ENCODE measurements at regions of chr2 and their contacts with region 1.

Region 1: DNA sequence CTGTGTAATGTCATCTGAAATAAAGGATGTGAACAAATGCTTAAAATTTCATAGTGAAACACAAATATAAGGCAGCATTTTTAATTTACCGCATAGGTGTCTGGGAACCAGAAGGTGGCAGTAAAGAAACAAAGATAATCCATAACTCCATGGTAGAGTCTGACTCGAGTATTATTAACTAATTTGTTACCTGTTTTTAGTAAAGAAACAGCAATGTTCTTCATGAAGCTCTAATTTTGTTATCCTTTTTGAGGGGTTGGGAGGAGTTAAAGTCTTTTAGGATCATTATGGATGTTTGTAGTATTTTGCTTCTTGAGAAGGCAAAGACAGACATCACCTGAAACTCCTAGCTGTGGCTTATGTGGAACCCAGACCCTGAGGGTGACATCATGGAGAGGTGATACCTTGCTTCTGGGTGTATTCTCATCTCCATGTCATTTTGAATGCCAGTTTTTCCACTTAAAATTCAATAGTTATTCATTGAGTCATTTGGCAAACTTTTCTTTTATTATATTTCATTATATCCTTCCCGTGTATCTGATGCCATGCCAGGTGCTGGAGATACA is 286.2 kb upstream of the EPAS1 start:
- DNase-seq: no peak
- H3K4me3 ChIP-seq: no peak overlapping the region
- H3K27ac ChIP-seq: no peak overlapping the region
- H3K4me1 ChIP-seq: peaks cover 0 to 8% (median 4%) of the 10 kb centered on the region in 4 donors
- H3K27me3 ChIP-seq: no peaks in the 10 kb centered on the region
- CTCF ChIP-seq: peak; percentile 56 to 77 (median 64)
- EP300 ChIP-seq: no peak
- POLR2A ChIP-seq: no peak

Region 2: GRCh38 chr2:46179037-46179652 is 168.1 kb after region 1 on chr2:
- in situ Hi-C with region 1: no loop called
- intact Hi-C with region 1: no loop called
- DNase-seq: peak; percentile 48
- H3K4me3 ChIP-seq: no peak overlapping the region
- H3K27ac ChIP-seq: peak overlapping the region; percentile 40 to 56 (median 54)
- H3K4me1 ChIP-seq: peaks cover 0 to 21% (median 15%) of the 10 kb centered on the region in 4 donors
- H3K27me3 ChIP-seq: no peaks in the 10 kb centered on the region
- CTCF ChIP-seq: no peak
- EP300 ChIP-seq: no peak
- POLR2A ChIP-seq: no peak

Region 3: GRCh38 chr2:46335391-46336282 is 324.6 kb after region 1 on chr2:
- in situ Hi-C with region 1: no loop called
- intact Hi-C with region 1: no loop called
- DNase-seq: peak; percentile 63
- H3K4me3 ChIP-seq: peak overlapping the region in 3 of 4 donors; percentile 15 to 31 (median 15)
- H3K27ac ChIP-seq: peak overlapping the region; percentile 86 to 88 (median 87)
- H3K4me1 ChIP-seq: peaks cover 41 to 82% (median 51%) of the 10 kb centered on the region in 4 donors
- H3K27me3 ChIP-seq: no peaks in the 10 kb centered on the region
- CTCF ChIP-seq: peak in 1 of 5 experiments; percentile 5
- EP300 ChIP-seq: no peak
- POLR2A ChIP-seq: no peak

Region 4: DNA sequence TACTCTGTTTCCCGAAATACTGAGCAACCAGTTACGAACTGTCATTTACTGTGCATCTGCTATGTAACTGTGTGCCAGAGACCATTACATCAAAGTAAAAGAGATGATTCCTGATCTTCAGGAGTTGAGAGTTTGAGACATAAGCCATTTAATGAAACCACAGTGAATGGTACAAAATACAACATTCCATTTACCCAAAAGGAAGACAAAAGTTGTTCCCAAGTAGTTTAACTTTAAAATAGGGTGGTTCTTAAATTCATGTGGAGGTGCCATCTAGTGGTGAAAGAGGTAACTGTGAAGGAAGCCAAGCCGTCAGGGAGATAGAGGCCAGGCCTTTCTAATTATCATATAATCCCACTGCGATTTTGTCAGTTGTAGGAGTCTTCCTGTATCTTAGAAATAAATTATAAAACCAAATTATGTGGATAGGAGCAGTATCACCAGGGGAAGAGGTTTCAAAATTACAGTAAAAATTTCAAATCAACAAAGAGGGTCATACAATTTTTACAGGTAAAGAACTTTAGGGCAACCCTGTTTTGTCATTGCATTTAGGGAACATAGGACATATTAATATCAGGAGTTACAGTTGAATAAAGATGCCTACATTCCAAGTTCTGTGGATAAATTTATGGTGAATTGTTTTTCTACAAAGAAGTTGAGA is 353.9 kb after region 1 on chr2:
- in situ Hi-C with region 1: loop called in 3 of 4 experiments (anchors 10 to 25 kb)
- intact Hi-C with region 1: no loop called
- DNase-seq: peak; percentile 37
- H3K4me3 ChIP-seq: no peak overlapping the region
- H3K27ac ChIP-seq: no peak overlapping the region
- H3K4me1 ChIP-seq: peaks cover 0 to 4% (median 0%) of the 10 kb centered on the region in 4 donors
- H3K27me3 ChIP-seq: no peaks in the 10 kb centered on the region
- CTCF ChIP-seq: peak; percentile 80 to 92 (median 85)
- EP300 ChIP-seq: no peak
- POLR2A ChIP-seq: no peak

Region 5: DNA sequence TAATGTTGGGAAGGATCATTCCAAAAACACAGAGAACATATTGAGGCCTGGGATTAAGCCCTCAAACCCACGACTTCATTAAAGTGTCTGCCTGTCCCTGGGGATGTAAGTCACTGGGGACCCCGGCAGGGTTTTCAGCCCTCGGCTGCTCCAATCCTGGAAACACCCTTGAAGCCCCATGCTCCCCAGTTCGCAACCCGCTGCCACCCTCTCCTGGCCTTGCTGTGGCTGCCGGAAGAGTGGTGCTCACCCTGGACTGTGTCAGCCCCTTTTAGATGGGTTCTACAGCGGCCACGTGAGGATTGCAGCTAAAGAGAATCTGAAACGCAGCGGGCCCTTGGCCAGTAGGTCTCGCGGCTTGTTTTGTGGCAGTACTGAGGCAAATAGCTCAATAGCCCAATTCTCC is 366.2 kb after region 1 on chr2:
- in situ Hi-C with region 1: loop called in 3 of 4 experiments (anchors 10 to 25 kb)
- intact Hi-C with region 1: no loop called
- DNase-seq: no peak
- H3K4me3 ChIP-seq: no peak overlapping the region
- H3K27ac ChIP-seq: peak overlapping the region in 3 of 4 donors; percentile 7 to 43 (median 36)
- H3K4me1 ChIP-seq: peaks cover 0 to 16% (median 4%) of the 10 kb centered on the region in 4 donors
- H3K27me3 ChIP-seq: no peaks in the 10 kb centered on the region
- CTCF ChIP-seq: no peak
- EP300 ChIP-seq: no peak
- POLR2A ChIP-seq: no peak

Region 6: DNA sequence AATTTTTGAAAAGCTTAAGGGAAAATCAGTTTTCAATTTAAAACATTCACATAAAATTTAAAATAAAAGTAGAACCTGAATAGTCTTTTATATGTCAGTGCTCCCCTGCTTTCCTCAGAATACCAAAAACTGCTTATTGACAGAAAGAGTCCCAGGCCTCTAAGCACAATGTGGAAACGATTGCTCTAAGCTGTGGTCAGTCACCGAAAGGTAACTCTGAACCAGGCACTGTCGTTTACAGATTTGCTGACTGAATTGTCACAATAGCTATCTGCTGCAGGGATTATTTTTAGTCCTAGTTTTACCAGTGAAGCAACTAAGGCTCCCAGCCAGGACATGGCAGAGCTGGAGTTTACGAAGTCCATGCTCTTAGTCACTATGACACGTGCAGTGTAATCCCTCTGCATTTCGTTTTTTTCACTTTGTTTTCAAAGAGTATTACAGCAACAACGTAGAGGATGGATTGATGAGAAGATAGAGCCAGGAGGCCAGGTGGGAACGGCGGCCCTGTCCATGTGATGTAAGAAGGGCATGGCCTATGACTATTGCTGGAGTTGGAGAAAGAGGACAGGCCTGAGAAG is 440.2 kb after region 1 on chr2:
- in situ Hi-C with region 1: loop called in 1 of 4 experiments (anchors 10 kb)
- intact Hi-C with region 1: no loop called
- DNase-seq: no peak
- H3K4me3 ChIP-seq: no peak overlapping the region
- H3K27ac ChIP-seq: no peak overlapping the region
- H3K4me1 ChIP-seq: no peaks in the 10 kb centered on the region
- H3K27me3 ChIP-seq: no peaks in the 10 kb centered on the region
- CTCF ChIP-seq: no peak
- EP300 ChIP-seq: no peak
- POLR2A ChIP-seq: no peak